Left cardiac atrium (tissue), 4 donors: ENCODE measurements at regions of chr2 and their contacts with region 1.

Region 1: DNA sequence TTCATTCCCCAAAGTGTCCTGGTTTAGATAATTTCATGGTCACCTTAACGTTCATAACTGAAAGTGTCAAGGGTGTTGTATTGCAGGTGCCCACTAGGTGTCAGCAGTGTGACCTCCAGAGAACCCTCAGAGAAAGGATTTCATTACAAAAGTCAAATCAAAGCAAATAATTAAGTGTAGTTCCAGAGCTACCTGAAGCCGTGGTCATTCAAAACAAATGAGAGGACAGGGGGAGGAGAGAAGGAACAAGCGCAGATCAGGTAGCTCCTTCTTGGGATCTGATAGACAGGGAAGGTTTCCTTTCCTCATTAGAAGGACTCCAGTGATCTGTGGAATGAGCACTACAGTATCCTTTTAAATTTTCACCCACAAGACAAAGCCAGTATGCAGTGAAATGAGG is at the start of gene SLC9A4:
- DNase-seq: peak; percentile 32
- ATAC-seq: peak in 1 of 2 donors; percentile 48
- total RNA-seq, gene SLC9A4: not detected

Region 2: GRCh38 chr2:102520028-102520427 is 47.0 kb after region 1 on chr2:
- intact Hi-C with region 1: no loop called
- DNase-seq: no peak
- ATAC-seq: peak in 1 of 2 donors; percentile 47

Region 3: GRCh38 chr2:102615622-102616436 is 142.8 kb after region 1 on chr2:
- intact Hi-C with region 1: loop called in 1 of 2 experiments (anchors 10 kb)
- DNase-seq: peak; percentile 52
- ATAC-seq: peak in 1 of 2 donors; percentile 79

Region 4: GRCh38 chr2:102703748-102704147 is 230.7 kb after region 1 on chr2:
- intact Hi-C with region 1: loop called (anchors 1 to 10 kb)
- DNase-seq: no peak
- ATAC-seq: peak; percentile 47 to 50

Region 5: DNA sequence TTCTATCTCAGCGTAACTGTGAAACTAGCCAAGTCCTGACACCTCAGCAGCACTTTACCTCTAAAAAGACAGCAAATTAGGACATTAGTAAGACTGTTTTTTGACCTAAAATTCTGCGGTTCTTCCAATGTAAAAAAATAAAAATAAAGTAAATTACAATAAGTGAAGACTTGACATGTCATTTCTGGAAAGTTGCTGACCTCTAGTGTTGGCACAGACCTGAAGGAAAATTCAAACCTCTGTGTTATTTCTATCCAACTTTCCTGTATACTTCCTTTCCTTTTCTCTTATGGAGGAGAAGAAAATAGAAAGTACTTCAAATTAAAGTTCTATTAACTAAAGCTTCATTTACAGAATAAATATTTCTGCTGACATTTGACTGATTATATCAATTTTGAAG is 399.4 kb after region 1 on chr2:
- intact Hi-C with region 1: loop called (anchors 5 to 10 kb)
- DNase-seq: no peak
- ATAC-seq: no peak